Activated naive CD4-positive, alpha-beta T cell treated with anti-CD3 and anti-CD28 coated beads for 36 hours (primary cell): ENCODE measurements at regions of chr13 and their contacts with region 1.

Region 1: GRCh38 chr13:20160847-20161274 is at the start of gene GJA3:
- DNase-seq: peak; percentile 68
- H3K4me3 Mint-ChIP-seq: peak within 1 kb of the TSS; percentile 73
- H3K27ac Mint-ChIP-seq: no peak within 1 kb of the TSS
- H3K4me1 Mint-ChIP-seq: peaks cover 8% of the 10 kb centered on the region
- H3K27me3 Mint-ChIP-seq: peaks cover 47% of the 10 kb centered on the region
- total RNA-seq, gene GJA3: 0.05 to 0.10 TPM

Region 2: GRCh38 chr13:19153782-19154450 is 1006.9 kb before region 1 on chr13:
- CTCF ChIA-PET with region 1: no interaction called
- intact Hi-C with region 1: loop called (anchors 5 kb)
- DNase-seq: peak; percentile 47
- H3K4me3 Mint-ChIP-seq: no peak overlapping the region
- H3K27ac Mint-ChIP-seq: no peak overlapping the region
- H3K4me1 Mint-ChIP-seq: no peaks in the 10 kb centered on the region
- H3K27me3 Mint-ChIP-seq: no peaks in the 10 kb centered on the region

Region 3: DNA sequence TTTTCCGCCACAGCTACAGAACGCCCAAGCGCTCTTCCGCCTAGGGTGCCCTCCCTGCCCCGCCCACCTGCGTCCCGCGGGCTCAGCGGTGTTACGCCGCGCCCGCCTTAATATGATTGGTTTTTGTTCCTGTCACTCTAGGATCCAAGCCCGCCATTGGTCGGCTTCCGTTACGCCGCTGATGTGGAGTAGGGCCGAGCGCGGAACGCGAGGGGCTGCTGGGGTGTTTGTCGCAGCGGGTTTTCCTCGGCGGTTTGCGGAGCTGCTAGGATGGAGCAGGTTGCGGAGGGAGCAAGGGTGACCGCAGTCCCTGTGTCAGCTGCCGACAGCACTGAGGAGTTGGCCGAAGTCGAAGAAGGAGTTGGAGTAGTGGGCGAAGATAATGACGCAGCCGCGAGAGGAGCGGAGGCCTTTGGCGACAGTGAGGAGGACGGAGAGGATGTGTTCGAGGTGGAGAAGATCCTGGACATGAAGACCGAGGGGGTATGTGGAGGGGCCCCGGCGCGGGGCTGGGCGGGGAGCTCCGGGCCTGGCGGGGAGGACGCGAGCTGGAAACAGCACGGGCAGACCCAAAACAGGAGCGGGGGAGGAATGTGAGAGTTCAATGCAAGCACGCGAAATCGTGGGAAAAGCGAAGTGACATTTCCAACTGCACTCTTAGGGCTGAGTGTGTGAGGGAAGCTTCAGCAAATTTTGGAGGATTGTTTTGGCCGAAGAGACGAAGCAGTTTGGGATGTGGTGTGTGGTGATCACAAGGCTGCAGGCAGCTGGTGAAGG is 527.2 kb before region 1 on chr13 and contains the start of gene MPHOSPH8:
- CTCF ChIA-PET with region 1: no interaction called
- intact Hi-C with region 1: loop called (anchors 1 kb)
- DNase-seq: peak; percentile 94
- H3K4me3 Mint-ChIP-seq: peak within 1 kb of the TSS; percentile 100
- H3K27ac Mint-ChIP-seq: peak within 1 kb of the TSS; percentile 98
- H3K4me1 Mint-ChIP-seq: peaks cover 32% of the 10 kb centered on the region
- H3K27me3 Mint-ChIP-seq: no peaks in the 10 kb centered on the region
- total RNA-seq, gene MPHOSPH8: 20.6 to 21.5 TPM

Region 4: GRCh38 chr13:19863323-19864023 is 297.4 kb before region 1 on chr13 and contains the start of gene ZMYM5:
- CTCF ChIA-PET with region 1: no interaction called
- intact Hi-C with region 1: loop called (anchors 2 kb)
- DNase-seq: peak; percentile 98
- H3K4me3 Mint-ChIP-seq: peak within 1 kb of the TSS; percentile 94
- H3K27ac Mint-ChIP-seq: peak within 1 kb of the TSS; percentile 95
- H3K4me1 Mint-ChIP-seq: peaks cover 37% of the 10 kb centered on the region
- H3K27me3 Mint-ChIP-seq: no peaks in the 10 kb centered on the region
- total RNA-seq, gene ZMYM5: 8.1 to 8.5 TPM

Region 5: DNA sequence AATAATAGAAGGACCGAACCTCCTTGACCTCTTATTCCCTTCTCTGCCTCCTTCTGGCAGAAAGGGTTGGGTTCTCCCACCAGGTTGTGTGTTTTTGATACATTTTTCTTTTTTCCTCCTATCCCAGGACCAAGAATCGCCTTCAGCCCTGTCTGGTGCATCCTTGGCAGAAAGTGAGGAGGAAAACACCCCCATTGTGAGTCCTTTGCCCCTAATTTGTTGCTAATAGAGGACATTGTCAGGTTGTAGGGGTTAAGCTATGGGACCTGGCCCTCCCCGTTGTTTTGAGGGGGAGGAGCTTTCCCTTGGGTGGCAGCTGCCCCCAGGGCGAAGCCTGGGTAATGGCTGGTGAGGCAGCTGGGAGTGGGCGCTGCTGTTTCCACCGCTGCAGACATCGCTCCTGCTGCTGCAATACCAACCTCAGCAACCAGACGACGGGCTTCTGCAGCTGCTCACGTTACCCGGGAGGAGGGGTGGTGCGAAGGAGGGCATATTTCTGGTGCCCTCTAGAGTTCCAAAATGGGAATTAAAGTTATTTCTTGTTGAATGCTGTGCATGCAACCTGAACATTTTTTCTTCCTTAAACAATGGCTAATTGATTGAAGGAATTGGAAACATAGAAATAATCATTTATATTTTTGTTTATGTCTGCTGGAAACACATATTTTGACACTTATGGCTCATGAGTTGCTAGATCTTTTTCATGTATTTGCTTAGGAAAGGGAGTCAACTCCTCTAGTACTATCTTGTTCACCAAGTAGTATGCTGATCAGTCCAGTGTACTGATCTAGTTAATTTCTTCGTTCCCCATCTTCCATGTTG is 200.8 kb before region 1 on chr13:
- CTCF ChIA-PET with region 1: no interaction called
- intact Hi-C with region 1: loop called (anchors 1 kb)
- DNase-seq: peak; percentile 92
- H3K4me3 Mint-ChIP-seq: peak overlapping the region; percentile 95
- H3K27ac Mint-ChIP-seq: peak overlapping the region; percentile 96
- H3K4me1 Mint-ChIP-seq: peaks cover 30% of the 10 kb centered on the region
- H3K27me3 Mint-ChIP-seq: no peaks in the 10 kb centered on the region

Region 6: DNA sequence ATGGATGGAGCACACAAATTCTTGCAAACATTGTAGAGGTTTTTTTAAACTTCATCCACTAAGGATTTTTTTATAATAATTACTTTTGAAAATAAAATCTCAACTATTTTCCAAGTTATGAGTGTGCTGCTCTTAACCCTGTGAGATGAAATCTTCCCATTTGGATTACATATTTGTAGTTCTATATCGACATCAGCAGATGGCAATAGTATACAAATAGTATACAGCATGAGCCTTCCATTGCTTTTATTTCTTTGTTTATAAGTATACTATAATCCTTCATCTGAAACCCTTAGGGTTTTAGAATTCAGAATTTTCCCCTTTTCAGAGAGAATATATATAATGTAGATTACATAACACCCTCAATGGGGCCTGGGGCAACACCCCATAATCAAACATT is 70.5 kb before region 1 on chr13:
- CTCF ChIA-PET with region 1: interaction called, 4 read pairs
- intact Hi-C with region 1: loop called (anchors 1 kb)
- DNase-seq: no peak
- H3K4me3 Mint-ChIP-seq: no peak overlapping the region
- H3K27ac Mint-ChIP-seq: no peak overlapping the region
- H3K4me1 Mint-ChIP-seq: no peaks in the 10 kb centered on the region
- H3K27me3 Mint-ChIP-seq: no peaks in the 10 kb centered on the region

Region 7: GRCh38 chr13:20127577-20128466 is 33.0 kb before region 1 on chr13:
- CTCF ChIA-PET with region 1: interaction called, 8 read pairs
- intact Hi-C with region 1: loop called (anchors 1 kb)
- DNase-seq: peak; percentile 47
- H3K4me3 Mint-ChIP-seq: peak overlapping the region; percentile 60
- H3K27ac Mint-ChIP-seq: no peak overlapping the region
- H3K4me1 Mint-ChIP-seq: no peaks in the 10 kb centered on the region
- H3K27me3 Mint-ChIP-seq: peaks cover 23% of the 10 kb centered on the region

Region 8: DNA sequence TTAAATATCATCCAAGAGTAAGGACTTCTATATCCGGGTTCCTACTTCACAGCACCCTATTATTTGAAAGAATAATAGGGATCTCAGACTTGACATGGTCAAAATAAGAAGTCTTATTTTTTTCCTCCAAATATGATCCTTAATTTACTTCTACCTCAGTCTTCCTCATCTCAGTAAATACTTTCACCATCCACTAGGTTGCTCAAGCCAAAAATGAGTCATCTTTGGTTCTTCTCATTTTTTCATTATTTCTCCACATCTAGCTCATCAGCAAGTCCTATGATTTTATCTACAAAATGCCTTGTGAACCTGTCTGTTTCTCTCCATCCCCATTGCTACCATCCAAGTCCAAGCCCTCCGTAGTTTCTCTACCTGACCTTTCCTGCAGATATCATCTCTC is 193.1 kb after region 1 on chr13:
- CTCF ChIA-PET with region 1: no interaction called
- intact Hi-C with region 1: no loop called
- DNase-seq: no peak
- H3K4me3 Mint-ChIP-seq: no peak overlapping the region
- H3K27ac Mint-ChIP-seq: no peak overlapping the region
- H3K4me1 Mint-ChIP-seq: no peaks in the 10 kb centered on the region
- H3K27me3 Mint-ChIP-seq: no peaks in the 10 kb centered on the region

Region 9: GRCh38 chr13:22017226-22017625 is 1856.4 kb after region 1 on chr13:
- CTCF ChIA-PET with region 1: no interaction called
- intact Hi-C with region 1: no loop called
- DNase-seq: no peak
- H3K4me3 Mint-ChIP-seq: no peak overlapping the region
- H3K27ac Mint-ChIP-seq: no peak overlapping the region
- H3K4me1 Mint-ChIP-seq: peaks cover 9% of the 10 kb centered on the region
- H3K27me3 Mint-ChIP-seq: no peaks in the 10 kb centered on the region